ENCODE measurements at regions of chr16 and their contacts with region 1.

Region 1: DNA sequence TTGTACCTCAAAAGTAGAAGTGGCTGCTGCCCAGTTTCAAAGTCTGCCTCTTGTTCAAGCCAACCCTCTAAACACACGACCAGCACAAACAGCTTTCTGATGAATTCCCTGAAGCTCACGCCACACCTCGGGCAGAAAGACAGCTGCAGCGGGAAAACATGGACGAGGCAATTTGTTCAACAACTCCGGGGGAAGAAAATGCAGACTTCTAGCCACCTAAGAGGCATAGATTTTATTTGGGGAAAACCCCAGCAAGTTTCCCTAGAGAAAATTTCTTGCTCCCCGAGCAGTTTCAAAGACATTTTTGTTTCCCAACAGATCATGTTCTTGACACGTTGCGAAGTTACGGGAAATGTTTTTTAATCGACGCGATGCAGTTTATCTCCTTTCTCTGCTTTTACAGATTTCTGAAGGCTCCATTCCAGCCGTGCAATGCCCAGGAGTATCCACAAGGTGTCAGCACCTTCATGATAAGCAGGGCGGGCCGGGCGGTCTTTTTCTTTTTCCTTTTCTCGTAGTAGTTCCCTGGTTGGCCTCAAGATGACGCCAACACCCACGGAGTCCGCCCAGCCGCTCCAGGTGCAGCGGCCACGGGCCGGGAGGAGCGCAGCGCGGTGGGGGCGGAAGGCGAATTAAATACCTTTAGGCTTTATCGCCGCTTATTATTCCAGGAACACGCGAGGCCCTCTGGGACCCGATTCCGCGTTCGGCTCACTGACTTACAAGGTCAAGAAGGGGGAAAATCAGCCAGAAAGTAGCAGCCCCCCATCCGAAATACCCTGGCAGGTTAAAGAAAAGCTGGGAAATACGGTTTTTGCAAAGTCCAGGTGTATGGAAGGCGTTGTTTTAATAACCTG is 2.9 kb upstream of the FOXC2 start:
- DNase-seq: peak; percentile 88
- H3K4me3 ChIP-seq: peak overlapping the region; percentile 16
- H3K27ac ChIP-seq: no peak overlapping the region
- H3K4me1 ChIP-seq: peaks cover 4% of the 10 kb centered on the region
- H3K27me3 ChIP-seq: peaks cover 43% of the 10 kb centered on the region
- CTCF ChIP-seq: peak; percentile 100

Region 2: GRCh38 chr16:86575754-86576557 is 12.2 kb after region 1 on chr16:
- CTCF ChIA-PET with region 1: interaction called, 11 read pairs
- POLR2A ChIA-PET with region 1: no interaction called
- intact Hi-C with region 1: no loop called
- DNase-seq: peak; percentile 93
- H3K4me3 ChIP-seq: peak overlapping the region; percentile 54
- H3K27ac ChIP-seq: no peak overlapping the region
- H3K4me1 ChIP-seq: peaks cover 17% of the 10 kb centered on the region
- H3K27me3 ChIP-seq: peaks cover 3% of the 10 kb centered on the region
- CTCF ChIP-seq: peak; percentile 80

Region 3: DNA sequence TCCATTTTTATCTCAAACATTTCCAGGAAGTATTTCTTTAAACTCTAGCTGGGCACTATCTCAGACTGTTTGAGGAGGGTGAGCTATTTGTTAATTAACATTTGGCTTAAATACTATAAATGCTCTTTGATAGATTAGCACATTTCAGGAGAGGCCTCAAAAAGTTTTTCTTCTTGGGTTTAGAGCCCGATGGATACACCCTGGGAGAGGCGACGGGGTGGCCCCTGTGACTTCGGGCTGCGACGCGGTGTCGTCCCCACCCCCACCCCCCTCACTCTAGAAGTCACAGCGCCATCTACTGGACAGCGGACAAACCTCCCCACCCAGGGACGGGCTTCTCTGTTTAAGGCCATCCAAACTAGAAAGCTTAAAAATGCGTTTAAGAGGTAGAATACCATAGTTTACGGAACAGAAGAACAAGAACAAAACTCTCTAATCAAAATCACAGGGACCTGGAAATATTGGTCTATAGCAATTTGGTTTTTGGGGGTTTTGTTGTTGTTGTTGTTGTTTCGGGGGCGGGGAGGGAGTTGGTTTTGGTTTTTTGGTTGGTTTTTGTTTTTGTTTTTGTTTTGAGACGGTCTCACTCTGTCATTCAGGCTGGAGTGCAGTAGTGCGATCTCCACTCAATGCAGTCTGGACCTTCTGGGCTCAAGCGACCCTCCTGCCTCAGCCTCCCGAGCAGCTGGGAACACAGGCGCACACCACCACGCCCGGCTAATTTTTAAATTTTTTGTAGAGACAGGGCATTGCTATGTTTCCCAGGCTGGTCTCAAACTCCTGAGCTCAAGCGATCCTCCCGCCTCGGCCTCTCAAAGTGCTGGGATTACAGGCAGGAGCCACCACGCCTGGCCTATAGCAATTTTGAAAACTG is 499.1 kb after region 1 on chr16:
- CTCF ChIA-PET with region 1: interaction called, 6 read pairs
- POLR2A ChIA-PET with region 1: no interaction called
- intact Hi-C with region 1: loop called (anchors 1 kb)
- DNase-seq: peak; percentile 82
- H3K4me3 ChIP-seq: no peak overlapping the region
- H3K27ac ChIP-seq: no peak overlapping the region
- H3K4me1 ChIP-seq: no peaks in the 10 kb centered on the region
- H3K27me3 ChIP-seq: no peaks in the 10 kb centered on the region
- CTCF ChIP-seq: peak; percentile 90

Region 4: DNA sequence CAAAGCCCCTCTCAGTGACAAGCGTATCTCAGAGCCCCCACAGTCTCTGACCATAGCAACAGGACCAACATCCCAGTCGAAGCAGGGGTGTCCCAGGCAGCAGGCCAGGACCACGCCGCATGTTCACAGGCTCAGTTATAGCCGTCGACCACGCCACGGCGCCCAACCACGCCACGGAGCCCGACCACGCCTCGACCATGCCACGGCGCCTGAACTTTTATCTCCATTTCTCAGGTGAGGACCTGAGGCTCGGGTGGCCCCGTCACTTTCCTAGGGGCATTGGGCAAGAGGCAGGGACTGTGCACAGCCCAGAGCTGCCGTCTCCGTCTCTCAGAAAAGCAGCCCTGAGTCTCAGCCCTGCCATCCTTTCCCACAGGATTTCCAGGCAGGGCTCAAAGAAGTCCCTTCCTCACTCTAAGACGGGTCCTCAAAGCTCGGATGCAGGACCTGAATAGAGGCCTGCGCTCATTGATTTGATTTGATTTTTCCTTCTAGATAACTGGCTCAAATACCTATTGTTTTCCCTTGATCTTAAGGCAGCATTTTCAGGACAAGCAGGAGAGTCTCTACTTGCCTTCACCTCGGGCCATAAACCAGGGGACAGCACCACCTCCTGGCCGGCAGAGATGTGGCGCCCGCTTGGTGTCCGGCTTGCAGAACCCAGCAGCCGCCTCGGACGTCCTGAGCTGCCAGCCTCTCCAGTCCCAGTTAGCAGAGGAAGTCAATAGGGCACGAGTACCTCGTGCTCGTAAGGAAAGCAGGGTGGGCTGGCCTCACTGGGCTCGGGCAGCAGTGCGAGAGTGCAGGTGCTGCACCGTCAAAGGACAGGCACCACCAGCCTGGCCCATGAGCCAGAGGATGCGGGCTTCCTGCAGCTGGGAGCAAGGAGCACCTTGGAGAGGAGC is 714.7 kb after region 1 on chr16:
- CTCF ChIA-PET with region 1: interaction called, 4 read pairs
- POLR2A ChIA-PET with region 1: no interaction called
- intact Hi-C with region 1: loop called (anchors 1 kb)
- DNase-seq: peak; percentile 70
- H3K4me3 ChIP-seq: no peak overlapping the region
- H3K27ac ChIP-seq: no peak overlapping the region
- H3K4me1 ChIP-seq: no peaks in the 10 kb centered on the region
- H3K27me3 ChIP-seq: no peaks in the 10 kb centered on the region
- CTCF ChIP-seq: peak; percentile 96